AG04449 (cell line): ENCODE measurements at regions of chr10 and their contacts with region 1.

Region 1: GRCh38 chr10:91632671-91633550 is at the start of gene PPP1R3C:
- DNase-seq: peak; percentile 80
- H3K4me3 ChIP-seq: peak within 1 kb of the TSS; percentile 79
- CTCF ChIP-seq: peak; percentile 68

Region 2: GRCh38 chr10:91298224-91298871 is 334.6 kb before region 1 on chr10:
- CTCF ChIA-PET with region 1: interaction called, 48 read pairs
- POLR2A ChIA-PET with region 1: interaction called, 4 read pairs
- DNase-seq: no peak
- H3K4me3 ChIP-seq: peak overlapping the region; percentile 54
- CTCF ChIP-seq: peak; percentile 96

Region 3: GRCh38 chr10:91467114-91467513 is 165.8 kb before region 1 on chr10:
- CTCF ChIA-PET with region 1: no interaction called
- POLR2A ChIA-PET with region 1: no interaction called
- DNase-seq: no peak
- H3K4me3 ChIP-seq: no peak overlapping the region
- CTCF ChIP-seq: no peak

Region 4: GRCh38 chr10:91487911-91488582 is 144.9 kb before region 1 on chr10:
- CTCF ChIA-PET with region 1: interaction called, 163 read pairs
- POLR2A ChIA-PET with region 1: interaction called, 28 read pairs
- DNase-seq: no peak
- H3K4me3 ChIP-seq: no peak overlapping the region
- CTCF ChIP-seq: no peak

Region 5: DNA sequence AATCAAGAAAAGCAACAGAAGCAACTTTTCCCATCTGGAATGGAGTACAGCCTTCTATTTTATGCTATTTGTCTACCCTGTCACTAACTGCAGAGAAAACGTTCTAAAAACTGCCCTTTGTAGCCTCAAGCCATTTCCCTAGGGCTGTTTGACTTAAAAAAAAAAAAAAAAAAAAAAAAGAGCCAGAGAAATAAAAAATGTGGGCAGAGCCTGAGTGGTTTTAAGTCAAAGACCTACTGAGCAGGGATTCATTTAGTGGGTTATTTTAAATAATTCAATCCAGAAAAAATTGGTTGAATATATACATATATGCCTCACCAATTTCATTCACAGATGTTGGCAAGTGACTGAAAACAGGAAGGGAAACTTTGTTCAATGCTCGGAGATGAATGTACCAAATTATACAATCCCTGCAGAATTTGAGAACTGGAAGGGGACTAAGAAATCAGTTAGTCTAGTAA is 75.2 kb before region 1 on chr10:
- CTCF ChIA-PET with region 1: interaction called, 142 read pairs
- POLR2A ChIA-PET with region 1: interaction called, 14 read pairs
- DNase-seq: no peak
- H3K4me3 ChIP-seq: no peak overlapping the region
- CTCF ChIP-seq: no peak

Region 6: GRCh38 chr10:91604553-91605534 is 28.1 kb before region 1 on chr10:
- CTCF ChIA-PET with region 1: interaction called, 16 read pairs
- POLR2A ChIA-PET with region 1: interaction called, 28 read pairs
- DNase-seq: peak; percentile 77
- H3K4me3 ChIP-seq: no peak overlapping the region
- CTCF ChIP-seq: peak; percentile 26

Region 7: GRCh38 chr10:91652364-91652763 is 19.5 kb after region 1 on chr10:
- CTCF ChIA-PET with region 1: interaction called, 48 read pairs
- POLR2A ChIA-PET with region 1: interaction called, 7 read pairs
- DNase-seq: peak; percentile 100
- H3K4me3 ChIP-seq: no peak overlapping the region
- CTCF ChIP-seq: no peak

Region 8: GRCh38 chr10:91758303-91759146 is 125.6 kb after region 1 on chr10:
- CTCF ChIA-PET with region 1: interaction called, 10 read pairs
- POLR2A ChIA-PET with region 1: no interaction called
- DNase-seq: peak; percentile 14
- H3K4me3 ChIP-seq: no peak overlapping the region
- CTCF ChIP-seq: peak; percentile 28

Region 9: DNA sequence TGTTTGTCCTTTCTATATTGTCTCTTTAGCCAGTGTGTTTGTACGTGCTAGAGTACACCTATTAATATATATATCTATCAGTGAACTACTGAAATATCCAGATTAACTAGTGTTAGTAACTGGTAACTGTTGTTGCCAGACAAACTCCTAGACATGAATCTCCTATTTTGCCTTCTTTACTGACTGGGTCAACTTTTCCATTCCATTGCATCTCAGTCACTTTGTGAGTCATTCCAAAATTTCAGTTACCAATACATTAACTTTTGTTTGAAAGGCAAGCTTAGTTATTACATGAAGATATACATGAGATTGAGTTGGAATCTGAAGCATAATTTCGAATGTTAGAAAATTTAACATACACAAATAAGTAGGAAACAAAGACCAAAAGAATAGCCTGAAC is 342.0 kb after region 1 on chr10:
- CTCF ChIA-PET with region 1: no interaction called
- POLR2A ChIA-PET with region 1: no interaction called
- DNase-seq: peak; percentile 28
- H3K4me3 ChIP-seq: no peak overlapping the region
- CTCF ChIP-seq: no peak